AG04450 (cell line): ENCODE measurements at regions of chr10 and their contacts with region 1.

Region 1: GRCh38 chr10:11823122-11823988 is at the start of gene PROSER2:
- DNase-seq: no peak
- H3K4me3 ChIP-seq: peak within 1 kb of the TSS; percentile 67
- H3K27ac ChIP-seq: no peak within 1 kb of the TSS
- H3K27me3 ChIP-seq: peaks cover 21% of the 10 kb centered on the region
- CTCF ChIP-seq: no peak
- polyA plus RNA-seq, gene PROSER2: 0.37 and 0.53 TPM in 2 replicates

Region 2: GRCh38 chr10:11505639-11506038 is 317.7 kb before region 1 on chr10:
- CTCF ChIA-PET with region 1: no interaction called
- POLR2A ChIA-PET with region 1: no interaction called
- DNase-seq: no peak
- H3K4me3 ChIP-seq: no peak overlapping the region
- H3K27ac ChIP-seq: no peak overlapping the region
- H3K27me3 ChIP-seq: no peaks in the 10 kb centered on the region
- CTCF ChIP-seq: no peak

Region 3: DNA sequence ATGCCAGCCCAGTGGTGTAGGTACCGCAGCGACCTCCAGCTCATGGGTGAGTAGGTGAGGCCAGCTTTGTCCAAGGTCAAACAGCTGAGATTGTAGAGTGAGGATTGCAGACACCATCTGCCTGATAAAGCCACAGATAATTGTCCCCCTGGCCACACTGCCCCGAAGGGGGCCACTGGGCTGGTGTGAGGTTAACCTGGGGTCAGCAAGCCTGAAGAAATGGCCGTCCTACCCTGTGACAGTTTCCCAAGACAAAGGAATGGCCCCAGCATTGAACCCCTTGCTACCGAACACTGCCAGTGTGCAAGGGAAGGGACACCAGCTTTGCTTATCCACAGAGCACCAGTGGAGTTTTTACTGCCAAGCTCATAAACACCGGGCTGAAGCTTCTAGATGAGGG is 58.2 kb before region 1 on chr10:
- CTCF ChIA-PET with region 1: no interaction called
- POLR2A ChIA-PET with region 1: no interaction called
- DNase-seq: no peak
- H3K4me3 ChIP-seq: no peak overlapping the region
- H3K27ac ChIP-seq: no peak overlapping the region
- H3K27me3 ChIP-seq: peaks cover 10% of the 10 kb centered on the region
- CTCF ChIP-seq: no peak

Region 4: GRCh38 chr10:11782793-11783557 is 40.4 kb before region 1 on chr10:
- CTCF ChIA-PET with region 1: interaction called, 33 read pairs
- POLR2A ChIA-PET with region 1: no interaction called
- DNase-seq: peak; percentile 32
- H3K4me3 ChIP-seq: no peak overlapping the region
- H3K27ac ChIP-seq: no peak overlapping the region
- H3K27me3 ChIP-seq: peaks cover 5% of the 10 kb centered on the region
- CTCF ChIP-seq: peak; percentile 80

Region 5: GRCh38 chr10:11793762-11794479 is 29.4 kb before region 1 on chr10:
- CTCF ChIA-PET with region 1: interaction called, 13 read pairs
- POLR2A ChIA-PET with region 1: no interaction called
- DNase-seq: no peak
- H3K4me3 ChIP-seq: no peak overlapping the region
- H3K27ac ChIP-seq: no peak overlapping the region
- H3K27me3 ChIP-seq: no peaks in the 10 kb centered on the region
- CTCF ChIP-seq: no peak

Region 6: GRCh38 chr10:11798845-11799735 is 24.3 kb before region 1 on chr10:
- CTCF ChIA-PET with region 1: interaction called, 15 read pairs
- POLR2A ChIA-PET with region 1: no interaction called
- DNase-seq: no peak
- H3K4me3 ChIP-seq: no peak overlapping the region
- H3K27ac ChIP-seq: no peak overlapping the region
- H3K27me3 ChIP-seq: no peaks in the 10 kb centered on the region
- CTCF ChIP-seq: no peak

Region 7: GRCh38 chr10:11810313-11810766 is 13.0 kb before region 1 on chr10:
- CTCF ChIA-PET with region 1: interaction called, 19 read pairs
- POLR2A ChIA-PET with region 1: no interaction called
- DNase-seq: peak; percentile 7
- H3K4me3 ChIP-seq: no peak overlapping the region
- H3K27ac ChIP-seq: no peak overlapping the region
- H3K27me3 ChIP-seq: peaks cover under 1% of the 10 kb centered on the region
- CTCF ChIP-seq: no peak

Region 8: GRCh38 chr10:11838298-11838852 is 15.0 kb after region 1 on chr10:
- CTCF ChIA-PET with region 1: interaction called, 10 read pairs
- POLR2A ChIA-PET with region 1: no interaction called
- DNase-seq: no peak
- H3K4me3 ChIP-seq: no peak overlapping the region
- H3K27ac ChIP-seq: no peak overlapping the region
- H3K27me3 ChIP-seq: no peaks in the 10 kb centered on the region
- CTCF ChIP-seq: no peak